ENCODE measurements at regions of chr1 and their contacts with region 1.

Region 1: DNA sequence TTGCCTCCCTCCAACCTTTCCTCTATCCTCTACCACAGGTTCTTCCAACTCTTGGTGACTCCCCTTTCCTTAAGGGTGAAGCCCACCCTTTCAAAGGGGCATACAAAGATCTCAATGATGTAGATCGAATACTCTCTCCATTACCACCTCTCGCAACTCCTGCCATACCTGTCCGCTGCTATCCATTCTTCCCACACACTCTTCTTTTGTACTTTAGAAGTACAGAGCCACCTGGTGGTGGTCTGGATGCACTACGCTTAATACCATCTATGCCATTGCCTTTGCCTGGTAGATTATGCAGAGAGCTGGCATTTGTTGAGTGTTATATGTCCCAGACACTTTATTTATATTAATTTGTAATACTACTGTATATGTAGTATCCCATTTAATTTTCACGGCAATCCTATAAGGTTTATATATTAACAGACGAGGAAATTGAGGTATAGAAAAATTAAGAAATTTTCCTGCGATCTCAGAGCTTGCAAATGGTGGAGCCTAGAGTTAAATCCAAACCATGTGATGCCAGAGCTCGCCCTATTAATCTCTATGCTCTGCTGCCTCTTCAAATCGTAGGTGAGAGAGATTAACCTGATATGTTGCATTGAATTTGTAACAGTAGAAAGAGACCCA is 22.9 kb downstream of the TSHB start:
- DNase-seq: peak; percentile 56
- ATAC-seq: peak; percentile 72

Region 2: DNA sequence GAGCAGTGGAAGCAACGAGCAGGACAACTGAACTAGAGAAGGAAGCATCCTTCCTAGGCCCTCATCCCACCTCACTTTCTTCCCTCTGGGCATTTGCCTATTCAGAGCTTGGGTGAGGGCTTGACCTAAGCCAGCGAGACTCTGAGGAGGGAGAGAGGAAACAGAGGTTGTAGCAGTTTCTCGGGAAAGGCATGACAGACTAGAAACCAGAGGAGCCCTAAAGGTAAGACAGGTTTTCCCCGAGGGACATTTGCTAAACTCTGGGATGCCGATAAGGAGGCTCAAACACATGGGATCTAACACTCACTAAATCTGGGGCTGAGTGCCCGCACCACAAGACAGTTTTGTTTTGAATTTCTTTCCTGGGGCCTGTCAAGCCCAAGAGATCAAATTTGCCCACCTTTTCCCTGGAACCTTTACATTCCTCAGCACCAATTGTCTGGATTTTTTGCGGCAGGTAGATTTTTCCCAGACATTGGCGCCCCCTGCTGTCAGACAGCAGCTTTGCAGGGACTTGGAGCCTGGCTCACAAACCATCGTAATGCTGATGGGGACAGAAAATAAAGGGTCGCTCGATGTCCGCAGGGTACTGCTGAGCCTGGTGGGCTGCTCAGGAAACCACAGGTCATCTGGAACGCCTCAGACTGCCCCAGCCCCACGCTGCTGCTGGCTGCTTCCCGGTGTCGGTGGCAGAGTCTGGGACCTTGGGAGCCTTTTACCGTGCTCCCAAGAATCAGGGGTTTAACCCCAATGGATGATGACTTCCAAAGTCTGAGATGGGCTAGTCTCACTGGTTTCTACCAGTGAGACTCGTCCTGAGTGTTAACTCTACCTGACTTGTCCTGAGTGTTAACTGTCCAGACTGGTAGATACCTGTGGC is 60.2 kb after region 1 on chr1:
- intact Hi-C with region 1: loop called (anchors 5 kb)
- DNase-seq: peak; percentile 53
- ATAC-seq: peak; percentile 36